ENCODE measurements at regions of chr5 and their contacts with region 1.

Region 1: DNA sequence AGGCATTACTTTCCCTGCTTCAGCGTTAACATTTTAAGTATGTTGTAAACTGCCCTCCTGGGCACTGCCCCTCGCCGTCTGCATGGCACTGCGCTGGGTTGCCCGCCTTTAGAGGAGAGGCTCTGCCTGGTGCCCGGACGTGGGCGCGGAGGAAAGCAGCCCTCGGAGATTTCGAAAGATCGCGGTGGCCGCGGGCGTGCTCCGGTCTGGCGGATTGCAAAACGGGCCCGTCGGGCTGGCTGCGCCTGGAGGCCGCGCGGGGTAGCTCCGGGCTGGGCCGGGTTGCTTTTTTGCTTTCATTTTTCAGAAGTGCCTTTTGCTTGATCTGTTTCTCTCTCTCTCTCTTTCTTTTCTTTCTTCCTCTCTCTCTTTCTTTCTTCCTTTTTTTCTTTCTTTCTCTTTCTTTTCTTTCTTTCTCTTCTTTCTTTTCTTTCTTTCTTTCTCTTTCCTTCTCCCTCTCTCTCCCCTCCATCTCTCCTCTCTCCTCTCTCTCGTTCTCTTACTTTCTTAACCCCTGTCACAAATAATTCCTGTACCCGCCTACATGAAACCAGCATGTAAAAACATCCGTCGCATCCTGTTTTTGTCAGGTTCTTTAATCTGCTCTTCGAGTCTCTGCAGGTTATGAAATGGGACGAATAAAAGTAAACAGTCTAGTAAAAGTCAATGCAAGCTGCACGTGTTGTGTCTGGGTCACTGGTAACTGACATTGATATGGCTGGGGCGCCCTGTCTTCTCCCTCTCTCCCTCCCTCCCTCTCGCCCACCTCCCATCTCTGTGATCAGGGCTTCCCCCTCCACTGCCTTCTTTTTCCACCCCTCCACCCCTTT is 1.7 kb downstream of the FST start:
- DNase-seq: peak; percentile 89
- H3K4me3 ChIP-seq: peak overlapping the region; percentile 34 to 81 (median 62)
- H3K27ac ChIP-seq: peak overlapping the region; percentile 69 to 84 (median 72)
- H3K4me1 ChIP-seq: peaks cover 0 to 30% (median 22%) of the 10 kb centered on the region in 4 donors
- H3K27me3 ChIP-seq: no peaks in the 10 kb centered on the region
- CTCF ChIP-seq: peak in 3 of 4 experiments; percentile 21 to 50 (median 32)
- EP300 ChIP-seq: no peak
- POLR2A ChIP-seq: no peak

Region 2: DNA sequence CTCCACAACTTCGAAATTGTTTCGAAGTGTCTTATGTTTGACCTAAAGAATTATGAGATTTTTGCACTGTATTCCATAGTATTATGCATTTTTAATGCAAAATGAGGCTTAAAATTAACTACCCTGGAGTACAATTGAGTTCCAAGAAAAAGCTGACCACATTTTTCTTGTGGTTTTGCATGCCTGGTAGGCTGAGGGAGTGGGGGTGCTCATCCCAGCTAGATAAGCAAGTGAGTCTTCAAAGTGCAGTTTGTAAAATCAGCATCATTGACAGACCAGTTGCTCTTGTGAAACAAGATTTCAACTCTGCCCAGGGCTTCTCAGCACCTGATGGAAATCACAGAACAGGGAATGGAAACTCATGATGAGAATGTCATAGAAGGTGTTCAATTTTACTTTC is 61.3 kb after region 1 on chr5:
- intact Hi-C with region 1: no loop called
- DNase-seq: no peak
- H3K4me3 ChIP-seq: no peak overlapping the region
- H3K27ac ChIP-seq: no peak overlapping the region
- H3K4me1 ChIP-seq: no peaks in the 10 kb centered on the region
- H3K27me3 ChIP-seq: no peaks in the 10 kb centered on the region
- CTCF ChIP-seq: no peak
- EP300 ChIP-seq: no peak
- POLR2A ChIP-seq: no peak

Region 3: DNA sequence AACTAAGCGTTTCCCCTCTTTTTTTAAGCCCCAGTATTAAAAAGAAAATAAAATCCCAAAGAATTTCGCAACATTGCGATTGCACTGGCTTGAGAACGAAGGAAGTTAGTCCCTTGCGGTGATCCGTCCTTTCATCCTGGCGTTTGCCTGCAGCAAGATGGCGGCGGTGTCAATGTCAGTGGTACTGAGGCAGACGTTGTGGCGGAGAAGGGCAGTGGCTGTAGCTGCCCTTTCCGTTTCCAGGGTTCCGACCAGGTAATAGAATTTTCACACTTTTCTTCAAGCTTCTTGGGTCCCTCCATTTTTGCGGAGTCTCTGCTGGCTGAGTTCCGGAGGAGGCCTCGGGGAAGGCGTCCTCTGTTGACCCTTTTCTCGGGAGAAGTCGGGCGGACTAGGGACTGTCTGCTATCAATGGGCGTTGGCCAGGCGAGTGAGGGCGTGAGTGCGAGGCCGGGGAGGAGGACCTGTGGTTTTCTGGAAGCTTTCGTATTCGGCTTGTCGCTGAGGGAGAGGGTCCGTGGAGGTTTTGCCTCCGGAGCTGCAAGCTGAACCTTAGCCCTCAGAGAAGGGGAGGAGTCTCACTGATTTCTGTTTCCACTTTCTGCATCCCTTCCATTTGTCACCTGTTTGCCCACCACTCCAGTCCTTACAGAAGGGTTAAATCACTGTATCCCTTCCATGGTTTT is 78.5 kb after region 1 on chr5 and contains the start of gene NDUFS4:
- intact Hi-C with region 1: loop called (anchors 2 kb)
- DNase-seq: peak; percentile 90
- H3K4me3 ChIP-seq: peak within 1 kb of the TSS; percentile 73 to 86 (median 83)
- H3K27ac ChIP-seq: peak within 1 kb of the TSS; percentile 84 to 89 (median 87)
- H3K4me1 ChIP-seq: peaks cover 0 to 40% (median 28%) of the 10 kb centered on the region in 4 donors
- H3K27me3 ChIP-seq: no peaks in the 10 kb centered on the region
- CTCF ChIP-seq: no peak
- EP300 ChIP-seq: no peak
- POLR2A ChIP-seq: peak; percentile 21 to 59
- total RNA-seq, gene NDUFS4: 106 to 179 (median 129) TPM

Region 4: GRCh38 chr5:54217826-54218503 is 735.9 kb after region 1 on chr5:
- intact Hi-C with region 1: loop called (anchors 5 kb)
- DNase-seq: no peak
- H3K4me3 ChIP-seq: no peak overlapping the region
- H3K27ac ChIP-seq: peak overlapping the region in 1 of 4 donors; percentile 33
- H3K4me1 ChIP-seq: peaks cover 0 to 46% (median 17%) of the 10 kb centered on the region in 4 donors
- H3K27me3 ChIP-seq: no peaks in the 10 kb centered on the region
- CTCF ChIP-seq: peak; percentile 53 to 81 (median 60)
- EP300 ChIP-seq: no peak
- POLR2A ChIP-seq: no peak